AG04450 (cell line): ENCODE measurements at regions of chr5 and their contacts with region 1.

Region 1: DNA sequence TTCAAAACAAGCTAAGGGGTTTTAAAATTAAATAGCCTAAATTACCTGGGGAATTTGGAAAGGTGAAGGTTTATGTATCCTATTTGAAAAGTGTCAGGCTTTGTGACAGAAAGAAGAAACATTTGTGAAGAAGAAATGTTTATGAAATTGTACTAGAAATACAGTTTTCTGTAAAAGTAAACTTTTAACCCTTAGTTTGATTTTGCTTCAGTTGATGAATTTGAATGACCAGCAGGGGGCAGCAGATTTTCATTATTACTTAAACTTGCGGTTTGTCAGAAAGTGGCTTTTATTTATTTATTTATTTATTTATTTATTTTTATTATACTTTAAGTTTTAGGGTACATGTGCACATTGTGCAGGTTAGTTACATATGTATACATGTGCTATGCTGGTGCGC is 58.1 kb downstream of the NNT start:
- DNase-seq: no peak
- H3K4me3 ChIP-seq: no peak overlapping the region
- H3K27ac ChIP-seq: no peak overlapping the region
- H3K27me3 ChIP-seq: no peaks in the 10 kb centered on the region
- CTCF ChIP-seq: peak; percentile 53

Region 2: GRCh38 chr5:43606351-43606750 is 54.8 kb before region 1 on chr5:
- CTCF ChIA-PET with region 1: no interaction called
- POLR2A ChIA-PET with region 1: no interaction called
- DNase-seq: no peak
- H3K4me3 ChIP-seq: no peak overlapping the region
- H3K27ac ChIP-seq: no peak overlapping the region
- H3K27me3 ChIP-seq: no peaks in the 10 kb centered on the region
- CTCF ChIP-seq: no peak

Region 3: DNA sequence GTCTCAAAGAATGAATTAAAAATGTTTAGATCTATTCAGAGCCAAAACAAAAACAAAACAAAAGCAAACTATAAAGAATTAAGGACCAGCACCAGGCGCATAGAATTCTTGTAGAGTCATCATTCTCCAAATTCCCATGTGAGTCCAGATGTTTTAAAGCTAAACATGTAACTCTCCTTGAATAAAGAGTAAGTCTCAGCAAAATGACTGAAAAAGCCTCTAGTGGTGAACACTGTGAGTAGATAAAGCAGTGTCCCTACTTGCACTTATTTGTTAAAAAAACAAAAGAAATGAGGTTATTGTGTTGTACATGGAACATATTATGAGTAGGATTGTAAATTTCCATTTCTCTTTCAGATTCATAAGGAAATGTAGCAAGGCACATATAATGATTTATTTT is 14.1 kb before region 1 on chr5:
- CTCF ChIA-PET with region 1: interaction called, 16 read pairs
- POLR2A ChIA-PET with region 1: no interaction called
- DNase-seq: no peak
- H3K4me3 ChIP-seq: no peak overlapping the region
- H3K27ac ChIP-seq: no peak overlapping the region
- H3K27me3 ChIP-seq: no peaks in the 10 kb centered on the region
- CTCF ChIP-seq: peak; percentile 52